Transverse colon (tissue), 4 donors: ENCODE measurements at regions of chr6 and their contacts with region 1.

Region 1: GRCh38 chr6:22133357-22133756 is 163.5 kb downstream of the PRL start:
- DNase-seq: no peak
- H3K4me3 ChIP-seq: no peak overlapping the region
- H3K27ac ChIP-seq: no peak overlapping the region
- H3K4me1 ChIP-seq: no peaks in the 10 kb centered on the region
- H3K27me3 ChIP-seq: no peaks in the 10 kb centered on the region
- CTCF ChIP-seq: no peak
- EP300 ChIP-seq: no peak
- POLR2A ChIP-seq: no peak

Region 2: DNA sequence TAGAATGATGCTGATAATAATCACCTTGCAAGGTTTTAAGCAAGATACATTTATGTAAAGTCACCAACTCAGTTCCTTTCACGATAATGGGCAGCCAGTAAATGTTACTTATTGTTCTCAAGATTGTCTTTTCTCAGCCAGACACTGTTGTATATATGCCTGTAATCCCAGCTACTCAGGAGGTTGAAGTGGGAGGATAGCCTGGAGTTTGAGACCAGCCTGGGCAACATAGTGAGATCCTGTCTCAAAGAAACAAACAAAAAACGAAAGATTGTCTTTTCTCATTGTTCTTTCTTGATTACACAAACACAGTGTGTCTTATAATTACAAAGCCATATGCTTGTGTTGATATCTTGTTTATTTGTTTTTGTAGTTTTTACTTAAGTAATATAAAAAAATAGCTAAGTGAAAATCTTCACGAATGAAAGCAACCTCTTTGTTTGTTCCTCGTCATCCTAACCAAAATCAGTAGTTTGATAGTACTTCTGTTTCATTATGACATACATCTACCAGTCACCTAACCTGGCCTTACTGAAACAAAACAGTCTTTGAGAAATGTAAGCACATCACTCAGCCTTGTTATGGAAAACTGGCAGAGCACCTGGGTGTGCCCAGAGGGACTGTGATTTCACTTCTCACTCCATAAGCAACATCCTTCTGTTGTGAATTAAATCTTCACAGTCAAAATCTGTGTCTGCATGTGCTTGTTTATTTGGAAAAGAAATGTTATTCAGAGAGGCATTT is 976.0 kb before region 1 on chr6:
- in situ Hi-C with region 1: no loop called
- intact Hi-C with region 1: loop called (anchors 5 kb)
- DNase-seq: no peak
- H3K4me3 ChIP-seq: no peak overlapping the region
- H3K27ac ChIP-seq: no peak overlapping the region
- H3K4me1 ChIP-seq: no peaks in the 10 kb centered on the region
- H3K27me3 ChIP-seq: no peaks in the 10 kb centered on the region
- CTCF ChIP-seq: no peak
- EP300 ChIP-seq: no peak
- POLR2A ChIP-seq: no peak

Region 3: GRCh38 chr6:21664314-21665109 is 468.8 kb before region 1 on chr6:
- in situ Hi-C with region 1: no loop called
- intact Hi-C with region 1: no loop called
- DNase-seq: peak; percentile 20
- H3K4me3 ChIP-seq: peak overlapping the region; percentile 26 to 60 (median 33)
- H3K27ac ChIP-seq: peak overlapping the region; percentile 16 to 67 (median 43)
- H3K4me1 ChIP-seq: peaks cover 0 to 30% (median 22%) of the 10 kb centered on the region in 4 donors
- H3K27me3 ChIP-seq: peaks cover 66% of the 10 kb centered on the region
- CTCF ChIP-seq: no peak
- EP300 ChIP-seq: no peak
- POLR2A ChIP-seq: no peak

Region 4: DNA sequence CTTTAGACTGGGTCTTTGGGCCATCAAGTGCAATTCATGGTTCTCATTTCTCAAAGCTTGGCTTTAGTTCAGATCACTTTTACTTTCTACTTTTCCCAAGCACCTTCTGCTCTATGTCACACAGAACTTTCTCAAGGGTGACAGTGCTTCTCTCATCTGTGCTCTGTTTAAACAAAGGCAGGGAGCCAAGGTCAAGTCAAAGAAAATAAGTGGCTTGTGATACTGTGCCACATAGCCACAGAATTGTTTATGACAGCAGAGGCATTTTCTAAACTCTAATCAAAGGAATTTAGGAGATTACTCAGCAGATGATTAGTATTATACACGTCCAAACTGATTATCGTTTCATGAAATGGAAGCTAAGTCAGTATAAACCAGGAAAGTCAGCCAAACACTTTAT is 784.0 kb after region 1 on chr6:
- in situ Hi-C with region 1: no loop called
- intact Hi-C with region 1: no loop called
- DNase-seq: no peak
- H3K4me3 ChIP-seq: no peak overlapping the region
- H3K27ac ChIP-seq: no peak overlapping the region
- H3K4me1 ChIP-seq: peaks cover 0 to 6% (median 0%) of the 10 kb centered on the region in 4 donors
- H3K27me3 ChIP-seq: no peaks in the 10 kb centered on the region
- CTCF ChIP-seq: no peak
- EP300 ChIP-seq: no peak
- POLR2A ChIP-seq: no peak